Dendritic cell treated with granulocyte-macrophage colony-stimulating factor and Interleukin-4, amounts not matched to agents 40 ng/mL and 50 ng/mL, for 4 days (primary cell): ENCODE measurements at regions of chr6 and their contacts with region 1.

Region 1: DNA sequence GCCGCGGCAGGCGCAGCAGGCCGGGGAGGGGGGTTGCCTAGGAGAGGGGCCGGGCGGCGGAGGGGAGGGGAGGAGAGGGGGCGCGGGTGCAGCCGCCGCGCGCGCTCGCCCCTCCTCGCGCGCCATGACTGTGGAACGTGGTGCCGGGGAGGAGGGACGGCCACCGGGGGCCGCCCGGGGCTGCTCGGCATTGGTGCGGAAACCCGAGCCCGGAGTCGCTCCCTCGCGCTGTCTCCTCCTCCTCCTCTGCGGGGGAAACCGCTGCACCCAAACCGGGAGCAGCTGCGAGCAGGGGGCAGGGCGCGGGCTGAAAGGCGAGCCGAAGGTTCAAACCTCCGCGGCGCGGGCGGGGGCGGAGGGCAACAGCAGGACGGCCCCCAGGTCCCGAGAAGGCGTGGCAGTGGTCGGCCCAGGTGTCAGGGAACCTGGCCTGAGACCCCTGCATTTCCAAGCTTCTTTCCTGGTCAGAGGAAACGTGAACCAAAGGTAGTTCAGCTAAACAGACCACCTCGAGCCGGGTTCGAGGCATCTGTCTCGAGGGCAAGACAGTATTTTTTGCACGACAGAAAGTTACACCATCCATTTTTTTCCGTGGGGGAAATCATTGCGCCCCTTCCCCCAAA is 1.4 kb upstream of the TRERF1 start:
- H3K4me3 Mint-ChIP-seq: peak overlapping the region; percentile 96
- H3K27ac Mint-ChIP-seq: peak overlapping the region; percentile 88
- H3K4me1 Mint-ChIP-seq: peaks cover 39% of the 10 kb centered on the region
- H3K27me3 Mint-ChIP-seq: peaks cover 10% of the 10 kb centered on the region

Region 2: DNA sequence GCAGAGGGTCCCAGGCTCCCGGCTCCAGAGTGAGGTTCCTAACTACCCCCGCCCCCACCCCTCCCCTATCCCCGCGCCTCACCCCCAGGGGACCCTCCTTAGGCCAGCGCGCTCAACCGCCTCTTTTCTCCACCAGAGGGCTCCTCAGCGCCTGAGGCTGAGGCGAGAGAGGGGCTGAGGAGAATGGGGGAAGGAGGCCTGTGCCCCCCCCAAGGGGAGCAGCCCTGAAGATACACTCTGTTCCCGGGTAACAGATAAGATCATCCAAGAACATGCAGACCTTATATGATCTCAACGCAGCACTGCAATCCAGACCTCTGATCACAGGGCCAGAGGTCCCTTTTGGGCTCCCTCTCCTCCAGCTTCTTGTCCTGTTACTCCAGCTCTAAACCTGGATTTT is 192.2 kb before region 1 on chr6:
- intact Hi-C with region 1: loop called (anchors 5 kb)
- H3K4me3 Mint-ChIP-seq: no peak overlapping the region
- H3K27ac Mint-ChIP-seq: no peak overlapping the region
- H3K4me1 Mint-ChIP-seq: peaks cover 11% of the 10 kb centered on the region
- H3K27me3 Mint-ChIP-seq: no peaks in the 10 kb centered on the region

Region 3: DNA sequence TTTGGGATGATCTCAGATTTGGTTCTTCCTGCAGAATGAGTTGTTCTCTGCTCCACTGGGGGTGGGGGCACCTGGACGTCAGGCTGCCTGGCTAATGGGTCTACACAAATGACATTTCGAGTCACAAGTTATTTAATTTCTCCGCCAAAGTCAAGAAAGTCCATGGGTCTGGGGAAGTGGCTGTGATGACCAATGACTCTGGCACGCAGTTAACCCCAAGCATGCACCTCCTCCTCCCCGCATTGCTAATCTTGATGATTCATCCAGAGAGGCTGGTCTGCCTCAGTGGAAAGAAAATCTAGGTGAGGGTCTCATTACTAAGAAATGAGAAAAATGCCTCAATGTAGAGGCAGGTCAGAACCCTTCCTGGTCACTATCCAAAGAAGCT is 137.2 kb before region 1 on chr6:
- intact Hi-C with region 1: loop called (anchors 2 kb)
- H3K4me3 Mint-ChIP-seq: no peak overlapping the region
- H3K27ac Mint-ChIP-seq: peak overlapping the region; percentile 92
- H3K4me1 Mint-ChIP-seq: peaks cover 81% of the 10 kb centered on the region
- H3K27me3 Mint-ChIP-seq: no peaks in the 10 kb centered on the region

Region 4: GRCh38 chr6:42367353-42368011 is 85.7 kb before region 1 on chr6:
- intact Hi-C with region 1: loop called (anchors 5 kb)
- H3K4me3 Mint-ChIP-seq: peak overlapping the region; percentile 51
- H3K27ac Mint-ChIP-seq: peak overlapping the region; percentile 79
- H3K4me1 Mint-ChIP-seq: peaks cover 95% of the 10 kb centered on the region
- H3K27me3 Mint-ChIP-seq: no peaks in the 10 kb centered on the region

Region 5: DNA sequence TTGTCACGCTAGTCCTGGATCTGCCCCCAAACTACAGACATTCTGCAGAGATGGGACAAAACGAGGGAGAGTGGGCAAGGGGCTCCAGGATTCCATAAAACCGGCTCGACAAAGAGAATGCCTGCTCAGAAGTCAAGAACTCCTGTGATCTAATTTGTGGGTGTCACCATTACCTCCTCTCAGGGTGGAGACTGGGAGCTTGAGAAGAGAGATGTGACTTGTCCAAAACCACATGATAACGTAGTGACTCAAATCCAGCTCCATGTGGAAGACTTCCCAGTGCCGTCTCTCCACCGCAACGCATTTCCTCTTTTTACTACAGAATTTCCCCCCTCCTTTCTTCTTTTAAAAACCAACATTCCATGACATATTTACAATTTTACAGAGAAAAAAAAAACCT is 45.8 kb before region 1 on chr6:
- intact Hi-C with region 1: loop called (anchors 5 kb)
- H3K4me3 Mint-ChIP-seq: peak overlapping the region; percentile 58
- H3K27ac Mint-ChIP-seq: peak overlapping the region; percentile 87
- H3K4me1 Mint-ChIP-seq: peaks cover 80% of the 10 kb centered on the region
- H3K27me3 Mint-ChIP-seq: no peaks in the 10 kb centered on the region

Region 6: DNA sequence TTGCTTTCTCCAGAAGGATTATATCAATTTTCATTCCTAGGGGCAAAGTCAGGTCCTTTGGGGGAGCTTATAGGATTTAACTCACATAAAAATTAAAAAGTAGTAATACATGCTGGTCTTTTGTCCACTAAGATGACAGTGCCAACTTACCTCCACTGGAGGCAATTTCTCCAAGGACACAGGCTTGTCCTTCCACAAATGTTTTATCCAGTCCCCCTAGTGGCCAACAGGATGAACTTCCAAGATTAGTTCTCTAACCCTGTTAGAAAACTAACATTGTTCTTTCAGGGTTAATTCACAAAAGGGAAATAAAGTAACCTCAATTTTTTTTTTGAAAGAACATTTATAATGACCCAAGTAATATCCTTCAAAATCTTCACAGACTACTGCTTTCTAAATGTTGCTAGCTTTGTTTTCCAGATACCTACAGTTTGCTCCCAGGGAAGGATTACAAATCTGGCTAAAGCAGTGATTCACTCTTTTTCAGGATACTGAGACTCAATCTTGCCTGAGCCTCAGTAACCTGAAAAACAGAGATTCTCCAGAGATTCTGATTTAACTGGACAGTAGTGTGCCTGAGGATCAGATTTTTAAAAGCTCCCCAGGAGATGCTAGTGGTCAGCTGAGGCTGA is 79.0 kb after region 1 on chr6:
- intact Hi-C with region 1: loop called (anchors 5 kb)
- H3K4me3 Mint-ChIP-seq: no peak overlapping the region
- H3K27ac Mint-ChIP-seq: no peak overlapping the region
- H3K4me1 Mint-ChIP-seq: peaks cover 50% of the 10 kb centered on the region
- H3K27me3 Mint-ChIP-seq: no peaks in the 10 kb centered on the region

Region 7: GRCh38 chr6:42547407-42548329 is 94.5 kb after region 1 on chr6:
- intact Hi-C with region 1: loop called (anchors 5 kb)
- H3K4me3 Mint-ChIP-seq: peak overlapping the region; percentile 74
- H3K27ac Mint-ChIP-seq: peak overlapping the region; percentile 76
- H3K4me1 Mint-ChIP-seq: peaks cover 14% of the 10 kb centered on the region
- H3K27me3 Mint-ChIP-seq: peaks cover 8% of the 10 kb centered on the region